Caco-2 (cell line): ENCODE measurements at regions of chr2 and their contacts with region 1.

Region 1: DNA sequence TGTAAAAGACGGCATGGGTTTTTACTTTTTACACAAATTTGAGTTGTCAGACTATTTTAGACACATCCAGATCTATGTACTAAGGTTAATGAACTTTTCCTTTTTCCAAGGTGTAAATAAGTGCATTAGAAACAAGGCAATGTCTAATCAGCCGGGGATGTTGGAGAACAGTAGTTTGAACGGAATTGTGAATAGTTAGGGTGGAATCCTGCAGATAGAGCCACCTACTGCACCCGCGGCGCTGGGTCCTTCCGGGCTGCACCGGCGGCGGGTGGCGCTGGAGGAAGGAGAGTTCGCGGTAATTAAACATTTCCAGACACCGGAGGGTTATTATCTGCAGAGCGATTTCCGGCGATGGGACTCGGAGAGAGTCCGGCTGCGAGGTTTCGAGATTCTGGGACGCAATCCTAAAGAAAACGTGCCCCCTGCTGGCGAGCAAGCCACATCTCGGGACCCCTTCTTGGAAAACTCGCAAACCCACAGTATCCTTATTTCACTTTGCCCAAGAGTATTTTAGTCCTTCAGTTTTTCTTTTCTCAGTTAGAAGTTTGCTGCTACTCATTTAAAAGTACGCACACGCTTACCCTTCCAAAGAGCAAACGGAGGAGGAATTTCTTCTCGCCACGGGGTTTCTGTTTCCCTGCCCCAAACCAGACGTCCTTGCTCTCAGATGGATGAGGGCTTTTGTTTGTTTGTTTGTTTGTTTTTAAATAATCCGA is 4.5 kb upstream of the OSR1 start:
- DNase-seq: peak; percentile 77 to 84
- H3K4me3 ChIP-seq: peak overlapping the region; percentile 36
- H3K4me3 Mint-ChIP-seq: peak overlapping the region; percentile 82
- H3K27ac Mint-ChIP-seq: no peak overlapping the region
- H3K4me1 ChIP-seq: no peaks in the 10 kb centered on the region; the same call in 1 of the 2 replicates
- H3K4me1 Mint-ChIP-seq: peaks cover 19% of the 10 kb centered on the region
- H3K27me3 ChIP-seq: no peaks in the 10 kb centered on the region
- H3K27me3 Mint-ChIP-seq: peaks cover 15% of the 10 kb centered on the region
- CTCF ChIP-seq: peak; percentile 83 to 85

Region 2: DNA sequence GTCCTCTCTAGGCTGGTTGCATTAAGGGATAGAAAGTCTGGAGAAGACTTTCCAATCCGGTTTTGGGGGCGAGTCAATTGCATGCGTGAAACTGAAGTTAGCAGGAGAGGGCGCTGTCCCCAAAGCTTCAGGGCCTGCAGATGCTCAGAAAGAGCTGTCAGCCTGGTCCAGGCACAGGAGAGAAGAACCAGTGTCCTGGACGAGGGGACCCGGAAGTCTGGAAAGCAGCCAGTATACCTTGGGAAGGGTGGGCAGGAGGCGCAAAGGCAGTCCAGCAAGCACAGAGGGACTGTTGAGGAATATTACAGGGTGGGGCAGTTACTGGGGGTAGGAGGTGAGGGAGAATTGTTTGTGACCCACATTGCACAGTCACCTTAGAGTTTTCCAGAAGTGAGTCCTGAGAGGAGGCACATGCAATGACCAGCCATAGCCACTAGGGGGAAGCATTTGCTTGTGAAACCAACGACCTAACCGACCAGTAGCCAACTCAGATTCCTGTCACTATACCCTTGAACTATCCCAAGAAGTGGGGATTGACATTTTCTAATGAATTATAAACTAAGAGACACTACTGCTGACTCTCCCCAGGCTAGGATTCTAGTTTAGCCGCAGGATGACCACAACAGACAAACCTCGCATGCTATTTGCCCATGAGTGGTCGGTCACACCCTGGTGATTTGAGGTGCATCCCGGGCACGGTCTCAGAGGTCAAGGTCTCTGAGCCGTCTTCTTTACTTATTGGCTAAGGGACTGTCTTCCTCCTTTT is 975.3 kb before region 1 on chr2:
- CTCF ChIA-PET with region 1: no interaction called
- POLR2A ChIA-PET with region 1: no interaction called
- intact Hi-C with region 1: loop called (anchors 5 kb)
- DNase-seq: peak; percentile 72 to 82
- H3K4me3 ChIP-seq: no peak overlapping the region
- H3K4me3 Mint-ChIP-seq: no peak overlapping the region
- H3K27ac Mint-ChIP-seq: no peak overlapping the region
- H3K4me1 ChIP-seq: no peaks in the 10 kb centered on the region; the same call in 1 of the 2 replicates
- H3K4me1 Mint-ChIP-seq: no peaks in the 10 kb centered on the region
- H3K27me3 ChIP-seq: no peaks in the 10 kb centered on the region; the same call in 1 of the 2 replicates
- H3K27me3 Mint-ChIP-seq: peaks cover 3% of the 10 kb centered on the region
- CTCF ChIP-seq: peak; percentile 95 to 98

Region 3: GRCh38 chr2:18520451-18521425 is 842.2 kb before region 1 on chr2:
- CTCF ChIA-PET with region 1: interaction called, 3 read pairs
- POLR2A ChIA-PET with region 1: no interaction called
- intact Hi-C with region 1: loop called (anchors 1 kb)
- DNase-seq: peak; percentile 75 to 79
- H3K4me3 ChIP-seq: no peak overlapping the region
- H3K4me3 Mint-ChIP-seq: no peak overlapping the region
- H3K27ac Mint-ChIP-seq: no peak overlapping the region
- H3K4me1 ChIP-seq: 0 out of 2 replicates have a peak, but pooled peaks cover 4% of the 10 kb centered on the region
- H3K4me1 Mint-ChIP-seq: no peaks in the 10 kb centered on the region
- H3K27me3 ChIP-seq: no peaks in the 10 kb centered on the region
- H3K27me3 Mint-ChIP-seq: peaks cover 3% of the 10 kb centered on the region
- CTCF ChIP-seq: peak; percentile 93 to 96

Region 4: GRCh38 chr2:18749912-18750526 is 612.9 kb before region 1 on chr2:
- CTCF ChIA-PET with region 1: interaction called, 3 read pairs
- POLR2A ChIA-PET with region 1: no interaction called
- intact Hi-C with region 1: loop called (anchors 1 kb)
- DNase-seq: peak in 1 of 2 experiments; percentile 69
- H3K4me3 ChIP-seq: no peak overlapping the region
- H3K4me3 Mint-ChIP-seq: no peak overlapping the region
- H3K27ac Mint-ChIP-seq: no peak overlapping the region
- H3K4me1 ChIP-seq: no peaks in the 10 kb centered on the region
- H3K4me1 Mint-ChIP-seq: no peaks in the 10 kb centered on the region
- H3K27me3 ChIP-seq: no peaks in the 10 kb centered on the region
- H3K27me3 Mint-ChIP-seq: peaks cover 8% of the 10 kb centered on the region
- CTCF ChIP-seq: peak; percentile 73 to 84

Region 5: DNA sequence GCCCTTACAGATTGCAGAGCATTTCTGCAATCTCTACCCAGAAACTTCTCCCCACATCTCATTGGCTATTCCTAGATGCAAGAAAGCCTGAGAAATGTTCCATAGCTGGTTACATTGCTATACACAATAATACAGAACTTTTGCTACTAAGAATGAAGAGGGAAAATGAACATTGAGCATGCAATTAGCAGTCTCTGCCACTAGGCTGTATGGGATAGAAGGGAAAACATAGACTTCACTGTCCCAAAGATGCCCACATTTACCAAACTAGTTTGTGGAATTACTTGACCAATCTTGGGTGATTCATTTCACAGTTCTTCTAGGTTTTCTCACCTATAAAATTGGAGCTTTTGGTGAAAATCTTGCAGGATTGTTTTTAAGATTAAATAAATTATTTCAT is 507.9 kb before region 1 on chr2:
- CTCF ChIA-PET with region 1: no interaction called
- POLR2A ChIA-PET with region 1: no interaction called
- intact Hi-C with region 1: loop called (anchors 1 kb)
- DNase-seq: peak in 1 of 2 experiments; percentile 7
- H3K4me3 ChIP-seq: no peak overlapping the region
- H3K4me3 Mint-ChIP-seq: no peak overlapping the region
- H3K27ac Mint-ChIP-seq: no peak overlapping the region
- H3K4me1 ChIP-seq: 0 out of 2 replicates have a peak, but pooled peaks cover 11% of the 10 kb centered on the region
- H3K4me1 Mint-ChIP-seq: no peaks in the 10 kb centered on the region
- H3K27me3 ChIP-seq: no peaks in the 10 kb centered on the region
- H3K27me3 Mint-ChIP-seq: peaks cover 12% of the 10 kb centered on the region
- CTCF ChIP-seq: peak in 1 of 2 experiments; percentile 34

Region 6: GRCh38 chr2:18987592-18988073 is 375.3 kb before region 1 on chr2:
- CTCF ChIA-PET with region 1: interaction called, 3 read pairs
- POLR2A ChIA-PET with region 1: no interaction called
- intact Hi-C with region 1: loop called (anchors 1 kb)
- DNase-seq: peak in 1 of 2 experiments; percentile 18
- H3K4me3 ChIP-seq: no peak overlapping the region
- H3K4me3 Mint-ChIP-seq: no peak overlapping the region
- H3K27ac Mint-ChIP-seq: no peak overlapping the region
- H3K4me1 ChIP-seq: no peaks in the 10 kb centered on the region
- H3K4me1 Mint-ChIP-seq: peaks cover 6% of the 10 kb centered on the region
- H3K27me3 ChIP-seq: no peaks in the 10 kb centered on the region
- H3K27me3 Mint-ChIP-seq: no peaks in the 10 kb centered on the region
- CTCF ChIP-seq: peak in 1 of 2 experiments; percentile 40

Region 7: GRCh38 chr2:19086231-19086651 is 276.7 kb before region 1 on chr2:
- CTCF ChIA-PET with region 1: no interaction called
- POLR2A ChIA-PET with region 1: no interaction called
- intact Hi-C with region 1: no loop called
- DNase-seq: no peak
- H3K4me3 ChIP-seq: no peak overlapping the region
- H3K4me3 Mint-ChIP-seq: no peak overlapping the region
- H3K27ac Mint-ChIP-seq: no peak overlapping the region
- H3K4me1 ChIP-seq: no peaks in the 10 kb centered on the region
- H3K4me1 Mint-ChIP-seq: no peaks in the 10 kb centered on the region
- H3K27me3 ChIP-seq: no peaks in the 10 kb centered on the region
- H3K27me3 Mint-ChIP-seq: no peaks in the 10 kb centered on the region
- CTCF ChIP-seq: no peak

Region 8: GRCh38 chr2:19216676-19217602 is 146.0 kb before region 1 on chr2:
- CTCF ChIA-PET with region 1: no interaction called
- POLR2A ChIA-PET with region 1: no interaction called
- intact Hi-C with region 1: no loop called
- DNase-seq: no peak
- H3K4me3 ChIP-seq: no peak overlapping the region
- H3K4me3 Mint-ChIP-seq: no peak overlapping the region
- H3K27ac Mint-ChIP-seq: no peak overlapping the region
- H3K4me1 ChIP-seq: 0 out of 2 replicates have a peak, but pooled peaks cover 4% of the 10 kb centered on the region
- H3K4me1 Mint-ChIP-seq: no peaks in the 10 kb centered on the region
- H3K27me3 ChIP-seq: no peaks in the 10 kb centered on the region
- H3K27me3 Mint-ChIP-seq: no peaks in the 10 kb centered on the region
- CTCF ChIP-seq: no peak

Region 9: DNA sequence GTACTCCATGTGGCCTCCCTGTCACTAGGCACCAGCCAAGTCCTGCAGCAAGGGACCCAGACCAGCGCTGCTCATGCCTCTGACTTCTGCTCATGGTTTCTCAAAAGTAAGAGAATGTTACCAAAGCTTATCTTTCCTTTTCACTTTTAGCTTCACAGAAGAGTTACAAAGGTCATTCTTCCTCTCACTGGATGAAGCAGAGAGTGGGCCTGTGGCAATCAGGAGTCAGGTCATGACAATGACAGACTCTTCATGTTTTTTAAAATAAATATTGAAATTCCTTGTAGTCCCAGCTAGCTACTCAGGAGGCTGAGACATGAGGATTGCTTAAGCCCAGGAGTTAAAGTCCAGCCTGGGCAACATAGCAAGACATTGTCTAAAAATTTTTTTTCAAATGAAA is 130.6 kb before region 1 on chr2:
- CTCF ChIA-PET with region 1: no interaction called
- POLR2A ChIA-PET with region 1: no interaction called
- intact Hi-C with region 1: loop called (anchors 2 kb)
- DNase-seq: peak; percentile 43 to 50
- H3K4me3 ChIP-seq: no peak overlapping the region
- H3K4me3 Mint-ChIP-seq: no peak overlapping the region
- H3K27ac Mint-ChIP-seq: no peak overlapping the region
- H3K4me1 ChIP-seq: peaks cover 8% of the 10 kb centered on the region
- H3K4me1 Mint-ChIP-seq: no peaks in the 10 kb centered on the region
- H3K27me3 ChIP-seq: no peaks in the 10 kb centered on the region
- H3K27me3 Mint-ChIP-seq: no peaks in the 10 kb centered on the region
- CTCF ChIP-seq: no peak

Region 10: GRCh38 chr2:19377717-19378116 is 14.8 kb after region 1 on chr2:
- CTCF ChIA-PET with region 1: no interaction called
- POLR2A ChIA-PET with region 1: no interaction called
- intact Hi-C with region 1: no loop called
- DNase-seq: no peak
- H3K4me3 ChIP-seq: no peak overlapping the region
- H3K4me3 Mint-ChIP-seq: no peak overlapping the region
- H3K27ac Mint-ChIP-seq: no peak overlapping the region
- H3K4me1 ChIP-seq: no peaks in the 10 kb centered on the region
- H3K4me1 Mint-ChIP-seq: no peaks in the 10 kb centered on the region
- H3K27me3 ChIP-seq: no peaks in the 10 kb centered on the region
- H3K27me3 Mint-ChIP-seq: peaks cover 12% of the 10 kb centered on the region
- CTCF ChIP-seq: peak in 1 of 2 experiments; percentile 15